Naive thymus-derived CD4-positive, alpha-beta T cell (primary cell): ENCODE measurements at regions of chr6 and their contacts with region 1.

Region 1: DNA sequence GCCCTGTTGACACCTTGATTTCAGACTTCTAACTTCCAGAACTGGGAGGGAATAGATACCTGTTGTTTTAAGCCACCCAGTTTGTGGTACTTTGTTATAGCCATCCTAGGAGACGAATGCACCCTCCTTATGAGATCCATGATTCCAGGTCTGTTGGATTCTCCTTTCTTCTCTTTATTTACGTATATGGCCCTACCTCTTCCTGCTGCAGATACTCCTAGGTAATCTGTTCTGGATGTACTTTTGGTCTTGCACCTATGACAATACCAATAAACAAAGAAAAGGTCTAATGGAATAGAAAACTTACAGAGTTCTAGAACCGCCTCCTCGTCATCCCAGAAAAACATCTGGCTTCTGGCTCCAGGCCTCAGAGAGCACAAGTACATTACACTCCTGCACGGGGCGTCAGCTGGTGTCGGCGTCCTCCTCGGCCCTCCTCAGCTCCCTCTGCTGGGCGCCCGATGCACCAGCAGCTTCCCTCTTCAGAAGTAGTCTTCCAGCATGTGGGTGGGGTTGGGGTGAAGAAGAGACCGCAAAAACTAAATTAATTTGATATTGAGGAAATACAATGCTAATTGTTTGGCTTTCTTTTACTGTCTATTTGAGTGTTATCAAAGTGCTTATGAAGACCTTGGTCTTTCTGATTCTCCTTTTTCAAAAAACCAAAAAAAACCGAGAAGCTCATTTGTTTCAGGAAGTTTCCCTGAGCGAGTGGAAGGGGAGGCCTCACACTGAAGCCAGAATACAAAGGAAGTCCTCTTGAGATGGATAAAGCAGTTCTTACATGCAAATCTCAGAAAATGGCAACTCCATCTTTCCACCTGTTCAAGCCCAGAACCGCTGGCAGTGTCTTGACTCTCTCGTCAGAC is 9.7 kb upstream of the ATXN1 start:
- DNase-seq: peak; percentile 56 to 79 (median 73)
- ATAC-seq: peak; percentile 95
- H3K4me3 ChIP-seq: no peak overlapping the region
- H3K4me3 Mint-ChIP-seq: peak overlapping the region in 4 of 10 donors; percentile 22 to 65 (median 41)
- H3K27ac ChIP-seq: no peak overlapping the region
- H3K27ac Mint-ChIP-seq: peak overlapping the region in 6 of 9 donors; percentile 3 to 86 (median 75)
- H3K4me1 ChIP-seq: peaks cover 24 to 34% of the 10 kb centered on the region in 2 donors
- H3K4me1 Mint-ChIP-seq: peaks cover 25 to 51% (median 42%) of the 10 kb centered on the region in 7 donors
- H3K27me3 ChIP-seq: no peaks in the 10 kb centered on the region
- H3K27me3 Mint-ChIP-seq: peaks cover 0 to 5% (median 0%) of the 10 kb centered on the region in 5 donors

Region 2: GRCh38 chr6:15534966-15535365 is 1236.0 kb before region 1 on chr6:
- CTCF ChIA-PET with region 1: no interaction called
- POLR2A ChIA-PET with region 1: no interaction called
- intact Hi-C with region 1: no loop called
- DNase-seq: no peak
- ATAC-seq: peak; percentile 80
- H3K4me3 ChIP-seq: no peak overlapping the region
- H3K4me3 Mint-ChIP-seq: no peak overlapping the region
- H3K27ac ChIP-seq: no peak overlapping the region
- H3K27ac Mint-ChIP-seq: peak overlapping the region in 2 of 9 donors; percentile 13 to 72
- H3K4me1 ChIP-seq: no peaks in the 10 kb centered on the region
- H3K4me1 Mint-ChIP-seq: peaks cover 8 to 38% (median 22%) of the 10 kb centered on the region in 7 donors
- H3K27me3 ChIP-seq: no peaks in the 10 kb centered on the region
- H3K27me3 Mint-ChIP-seq: no peaks in the 10 kb centered on the region

Region 3: GRCh38 chr6:16514249-16514648 is 256.7 kb before region 1 on chr6:
- CTCF ChIA-PET with region 1: interaction called, 4 read pairs
- POLR2A ChIA-PET with region 1: interaction called, 5 read pairs
- intact Hi-C with region 1: loop called in 1 of 2 experiments (anchors 1 kb)
- DNase-seq: peak in 6 of 9 donors; percentile 16 to 31 (median 24)
- ATAC-seq: peak; percentile 59
- H3K4me3 ChIP-seq: no peak overlapping the region
- H3K4me3 Mint-ChIP-seq: peak overlapping the region in 1 of 10 donors; percentile 41
- H3K27ac ChIP-seq: no peak overlapping the region
- H3K27ac Mint-ChIP-seq: peak overlapping the region in 7 of 9 donors; percentile 10 to 56 (median 40)
- H3K4me1 ChIP-seq: peaks cover 14 to 29% of the 10 kb centered on the region in 2 donors
- H3K4me1 Mint-ChIP-seq: peaks cover 29 to 73% (median 58%) of the 10 kb centered on the region in 7 donors
- H3K27me3 ChIP-seq: no peaks in the 10 kb centered on the region
- H3K27me3 Mint-ChIP-seq: no peaks in the 10 kb centered on the region

Region 4: DNA sequence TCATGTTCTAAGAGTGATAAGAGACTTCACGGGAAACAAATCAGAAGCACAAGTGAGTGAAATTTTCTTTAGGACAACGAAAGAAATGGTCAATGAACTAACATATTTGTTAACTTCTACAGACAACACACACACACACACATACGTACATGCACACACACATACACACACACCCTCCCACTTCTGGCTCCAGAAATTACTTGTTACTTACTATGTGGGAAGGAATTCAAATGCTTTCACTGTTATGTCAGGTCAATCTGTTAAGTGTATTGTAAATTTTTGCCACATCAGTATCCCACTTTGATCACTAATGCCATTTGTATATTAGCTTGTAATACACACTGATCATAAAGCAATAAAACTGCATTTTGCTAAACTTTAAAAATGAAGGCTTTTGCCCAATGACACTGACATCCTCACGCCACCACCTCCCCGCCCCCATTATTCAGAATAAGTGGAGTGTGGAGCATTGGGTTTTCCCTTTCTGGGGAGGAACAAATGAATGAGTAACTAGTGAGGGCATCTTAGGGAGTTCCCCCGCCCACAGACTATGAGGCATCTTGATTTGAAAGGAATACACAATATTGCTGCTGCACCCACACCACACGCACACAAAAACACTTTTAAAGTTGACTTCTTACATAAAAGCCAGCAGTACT is 85.9 kb before region 1 on chr6:
- CTCF ChIA-PET with region 1: no interaction called
- POLR2A ChIA-PET with region 1: no interaction called
- intact Hi-C with region 1: no loop called
- DNase-seq: peak in 3 of 9 donors; percentile 14 to 85 (median 52)
- ATAC-seq: peak; percentile 70
- H3K4me3 ChIP-seq: no peak overlapping the region
- H3K4me3 Mint-ChIP-seq: peak overlapping the region in 1 of 10 donors; percentile 54
- H3K27ac ChIP-seq: no peak overlapping the region
- H3K27ac Mint-ChIP-seq: peak overlapping the region in 3 of 9 donors; percentile 23 to 63 (median 30)
- H3K4me1 ChIP-seq: peaks cover 0 to 32% of the 10 kb centered on the region in 2 donors
- H3K4me1 Mint-ChIP-seq: peaks cover 4 to 70% (median 18%) of the 10 kb centered on the region in 7 donors
- H3K27me3 ChIP-seq: no peaks in the 10 kb centered on the region
- H3K27me3 Mint-ChIP-seq: no peaks in the 10 kb centered on the region

Region 5: DNA sequence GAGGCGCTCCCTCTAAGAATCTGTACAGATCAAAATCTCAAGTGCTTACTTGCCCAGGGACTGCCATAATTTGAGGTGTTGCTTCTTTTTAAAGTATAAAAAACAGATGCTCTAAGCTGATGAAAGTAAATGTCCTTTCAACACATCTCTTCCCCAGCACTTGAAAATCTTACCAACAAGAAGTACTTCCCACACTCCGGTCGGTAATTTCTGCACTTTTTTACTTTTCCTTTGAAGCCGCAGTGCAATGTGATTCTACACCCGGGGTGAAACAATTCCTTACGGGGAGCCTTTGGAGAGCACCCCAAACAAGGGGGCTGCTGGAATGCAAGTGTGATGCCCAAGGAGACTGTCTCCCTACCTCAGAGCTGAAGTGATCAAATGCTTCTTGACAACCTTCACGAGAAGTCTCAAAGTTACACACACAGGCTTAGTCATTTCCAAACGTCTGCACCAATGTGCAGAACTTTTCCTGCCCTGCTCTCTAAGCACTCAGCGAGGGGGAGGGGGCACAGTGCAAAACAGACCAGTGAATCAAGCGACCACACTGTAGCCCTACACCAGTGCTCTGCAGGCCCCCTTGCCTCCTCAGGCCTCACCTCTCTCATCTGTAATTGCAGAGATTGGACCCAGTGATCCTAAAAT is 66.4 kb before region 1 on chr6:
- CTCF ChIA-PET with region 1: no interaction called
- POLR2A ChIA-PET with region 1: no interaction called
- intact Hi-C with region 1: no loop called
- DNase-seq: peak in 1 of 9 donors; percentile 58
- ATAC-seq: peak; percentile 49
- H3K4me3 ChIP-seq: peak overlapping the region; percentile 21
- H3K4me3 Mint-ChIP-seq: peak overlapping the region; percentile 19 to 82 (median 58)
- H3K27ac ChIP-seq: no peak overlapping the region
- H3K27ac Mint-ChIP-seq: peak overlapping the region in 3 of 9 donors; percentile 12 to 81 (median 65)
- H3K4me1 ChIP-seq: peaks cover 10 to 48% of the 10 kb centered on the region in 2 donors
- H3K4me1 Mint-ChIP-seq: peaks cover 47 to 64% (median 57%) of the 10 kb centered on the region in 7 donors
- H3K27me3 ChIP-seq: no peaks in the 10 kb centered on the region
- H3K27me3 Mint-ChIP-seq: no peaks in the 10 kb centered on the region

Region 6: GRCh38 chr6:16731478-16732051 is 39.4 kb before region 1 on chr6:
- CTCF ChIA-PET with region 1: interaction called, 3 read pairs
- POLR2A ChIA-PET with region 1: no interaction called
- intact Hi-C with region 1: loop called in 1 of 2 experiments (anchors 1 kb)
- DNase-seq: peak in 1 of 9 donors; percentile 42
- ATAC-seq: peak; percentile 54
- H3K4me3 ChIP-seq: no peak overlapping the region
- H3K4me3 Mint-ChIP-seq: peak overlapping the region in 8 of 10 donors; percentile 3 to 78 (median 45)
- H3K27ac ChIP-seq: no peak overlapping the region
- H3K27ac Mint-ChIP-seq: peak overlapping the region in 4 of 9 donors; percentile 51 to 77 (median 74)
- H3K4me1 ChIP-seq: peaks cover 12 to 41% of the 10 kb centered on the region in 2 donors
- H3K4me1 Mint-ChIP-seq: peaks cover 14 to 65% (median 22%) of the 10 kb centered on the region in 7 donors
- H3K27me3 ChIP-seq: no peaks in the 10 kb centered on the region
- H3K27me3 Mint-ChIP-seq: no peaks in the 10 kb centered on the region

Region 7: DNA sequence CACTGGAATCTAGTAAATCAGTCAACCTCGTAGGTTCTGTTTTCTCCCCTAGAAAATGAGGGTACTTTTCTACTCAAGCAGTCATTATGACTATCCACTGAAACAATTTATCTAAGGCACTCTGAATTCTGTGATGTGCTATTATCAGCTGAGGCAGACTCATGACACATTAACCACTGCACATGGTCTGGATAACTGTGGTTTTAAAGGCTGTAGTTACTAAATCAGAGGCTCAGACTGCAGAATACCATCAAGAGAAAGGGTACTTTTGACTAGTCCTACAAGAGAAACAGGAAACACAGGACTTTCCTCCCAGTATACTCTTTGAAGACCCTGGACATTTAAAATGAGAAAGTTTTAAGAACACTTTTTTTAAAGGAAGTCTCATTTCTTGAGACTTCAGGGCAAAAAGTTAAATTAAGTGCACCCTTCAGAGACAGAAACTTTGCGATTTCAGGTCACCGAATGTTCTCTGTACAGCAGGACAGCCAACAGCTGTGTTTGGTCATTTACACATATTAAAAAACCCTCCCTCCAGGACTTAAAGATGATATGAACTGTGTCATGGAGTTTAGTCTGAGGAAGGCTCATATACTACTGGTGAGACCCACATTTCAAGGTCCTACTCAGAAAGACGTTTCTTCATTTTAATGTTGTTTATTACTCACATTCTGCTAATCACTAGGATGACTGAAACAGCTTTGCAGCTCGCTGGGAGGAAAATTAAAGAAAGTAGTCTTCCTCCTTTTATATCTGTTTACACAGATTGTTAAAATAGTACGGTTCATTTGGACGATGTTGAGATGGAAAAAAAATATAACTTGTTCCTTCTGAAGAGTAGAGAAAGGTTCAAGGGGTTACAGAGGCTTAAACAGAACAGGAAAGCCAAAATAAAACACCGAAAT is 29.6 kb before region 1 on chr6:
- CTCF ChIA-PET with region 1: interaction called, 24 read pairs
- POLR2A ChIA-PET with region 1: no interaction called
- intact Hi-C with region 1: loop called in 1 of 2 experiments (anchors 1 kb)
- DNase-seq: no peak
- ATAC-seq: peak; percentile 72
- H3K4me3 ChIP-seq: no peak overlapping the region
- H3K4me3 Mint-ChIP-seq: no peak overlapping the region
- H3K27ac ChIP-seq: no peak overlapping the region
- H3K27ac Mint-ChIP-seq: peak overlapping the region in 1 of 9 donors; percentile 43
- H3K4me1 ChIP-seq: peaks cover 0 to 16% of the 10 kb centered on the region in 2 donors
- H3K4me1 Mint-ChIP-seq: peaks cover 20 to 66% (median 33%) of the 10 kb centered on the region in 7 donors
- H3K27me3 ChIP-seq: no peaks in the 10 kb centered on the region
- H3K27me3 Mint-ChIP-seq: no peaks in the 10 kb centered on the region

Region 8: GRCh38 chr6:16836144-16836981 is 65.4 kb after region 1 on chr6:
- CTCF ChIA-PET with region 1: no interaction called
- POLR2A ChIA-PET with region 1: no interaction called
- intact Hi-C with region 1: loop called in 1 of 2 experiments (anchors 5 kb)
- DNase-seq: no peak
- ATAC-seq: peak; percentile 38
- H3K4me3 ChIP-seq: peak overlapping the region; percentile 40
- H3K4me3 Mint-ChIP-seq: peak overlapping the region in 6 of 10 donors; percentile 24 to 81 (median 45)
- H3K27ac ChIP-seq: no peak overlapping the region
- H3K27ac Mint-ChIP-seq: peak overlapping the region in 2 of 9 donors; percentile 37 to 74
- H3K4me1 ChIP-seq: peaks cover 0 to 18% of the 10 kb centered on the region in 2 donors
- H3K4me1 Mint-ChIP-seq: peaks cover 7 to 29% (median 14%) of the 10 kb centered on the region in 7 donors
- H3K27me3 ChIP-seq: no peaks in the 10 kb centered on the region
- H3K27me3 Mint-ChIP-seq: peaks cover 0 to 20% (median 10%) of the 10 kb centered on the region in 5 donors

Region 9: DNA sequence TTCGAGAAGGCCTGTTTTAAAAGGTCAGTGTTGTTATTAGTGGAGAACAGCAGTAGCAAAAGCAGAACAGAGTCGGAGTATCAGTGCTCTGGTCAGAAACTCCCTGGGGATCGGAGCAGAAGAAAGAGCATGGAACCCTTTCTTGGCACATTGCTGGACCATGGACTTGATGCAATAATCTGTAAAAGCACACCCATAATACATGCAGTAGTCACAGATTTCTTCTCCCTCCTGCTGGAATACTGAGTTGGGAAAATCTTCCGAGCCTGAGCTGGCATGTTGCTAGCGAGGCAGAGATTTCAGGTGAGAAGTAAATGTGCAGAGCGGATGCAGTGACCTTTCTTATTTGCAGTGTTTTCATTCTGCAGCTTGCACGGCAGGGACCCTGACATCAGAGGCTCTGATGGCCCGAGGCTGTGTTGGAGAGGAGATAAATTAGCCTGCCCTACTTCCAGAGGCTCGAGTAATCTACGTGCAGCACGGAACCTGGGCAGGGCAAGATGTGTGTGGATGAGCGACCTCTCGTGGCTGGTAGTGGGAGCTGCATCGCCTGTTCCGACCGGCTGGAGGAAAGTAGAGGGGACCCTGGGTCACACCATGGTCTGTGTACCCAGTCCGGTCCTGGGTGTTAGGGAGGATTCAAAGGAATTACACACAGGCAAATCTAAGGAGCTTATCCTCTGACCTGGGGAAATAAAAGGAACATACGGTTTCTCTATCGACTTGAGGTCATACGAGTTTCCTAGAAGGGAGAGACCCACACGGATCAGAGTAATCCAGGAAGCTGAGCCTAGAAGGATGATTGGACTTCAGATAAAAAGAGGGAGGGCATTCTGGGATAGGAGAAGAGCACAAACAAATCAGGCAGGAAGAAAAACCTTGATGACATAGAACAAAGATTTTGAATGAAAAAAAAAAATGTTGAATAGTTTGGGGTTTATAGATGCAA is 193.9 kb after region 1 on chr6:
- CTCF ChIA-PET with region 1: no interaction called
- POLR2A ChIA-PET with region 1: no interaction called
- intact Hi-C with region 1: loop called in 1 of 2 experiments (anchors 2 kb)
- DNase-seq: peak in 8 of 9 donors; percentile 8 to 66 (median 24)
- ATAC-seq: peak; percentile 90
- H3K4me3 ChIP-seq: peak overlapping the region; percentile 2
- H3K4me3 Mint-ChIP-seq: peak overlapping the region in 1 of 10 donors; percentile 5
- H3K27ac ChIP-seq: no peak overlapping the region
- H3K27ac Mint-ChIP-seq: no peak overlapping the region
- H3K4me1 ChIP-seq: no peaks in the 10 kb centered on the region
- H3K4me1 Mint-ChIP-seq: peaks cover 4 to 10% (median 5%) of the 10 kb centered on the region in 7 donors
- H3K27me3 ChIP-seq: no peaks in the 10 kb centered on the region
- H3K27me3 Mint-ChIP-seq: peaks cover 13 to 28% (median 24%) of the 10 kb centered on the region in 5 donors